Right ventricle myocardium inferior (tissue), 1 donor: ENCODE measurements at regions of chr12 and their contacts with region 1.

Region 1: DNA sequence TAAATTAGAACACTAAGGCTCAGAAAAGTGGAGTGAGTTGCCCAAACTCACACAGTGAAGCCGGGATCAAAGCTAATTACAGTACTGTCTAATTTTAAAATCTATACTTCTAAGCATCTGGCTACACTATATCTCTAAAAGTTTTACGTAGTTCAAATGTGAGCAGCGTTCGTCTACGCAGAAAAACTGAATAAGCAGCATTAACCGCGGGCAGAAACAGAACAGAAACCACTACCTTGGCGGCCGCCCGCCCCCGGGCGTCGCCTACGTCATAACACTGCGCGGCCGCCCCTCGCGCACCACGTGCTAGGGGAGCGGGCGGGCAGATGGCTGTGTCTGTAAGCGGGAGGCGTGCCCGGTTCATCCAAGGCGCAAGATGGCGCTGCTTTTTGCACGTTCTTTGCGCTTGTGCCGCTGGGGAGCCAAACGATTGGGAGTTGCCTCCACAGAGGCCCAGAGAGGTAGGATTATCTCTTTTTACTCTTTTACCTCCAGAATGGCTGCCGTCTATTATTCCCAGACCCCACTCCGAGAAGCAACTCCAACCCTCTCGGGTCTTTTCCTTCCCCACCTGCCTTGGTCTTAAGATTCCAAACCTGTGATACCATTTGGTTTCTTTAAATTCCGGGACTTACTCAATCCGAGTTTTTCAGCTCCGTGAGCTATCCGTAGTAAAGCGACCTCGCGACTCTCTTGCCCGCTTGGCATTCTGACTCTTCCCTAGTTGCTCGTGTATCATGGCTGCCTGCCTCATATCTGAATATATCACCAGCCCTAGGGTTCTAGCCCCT is at the start of gene SPRYD4:
- DNase-seq: peak; percentile 98
- ATAC-seq: peak; percentile 97
- total RNA-seq, gene SPRYD4: 3.1 TPM

Region 2: DNA sequence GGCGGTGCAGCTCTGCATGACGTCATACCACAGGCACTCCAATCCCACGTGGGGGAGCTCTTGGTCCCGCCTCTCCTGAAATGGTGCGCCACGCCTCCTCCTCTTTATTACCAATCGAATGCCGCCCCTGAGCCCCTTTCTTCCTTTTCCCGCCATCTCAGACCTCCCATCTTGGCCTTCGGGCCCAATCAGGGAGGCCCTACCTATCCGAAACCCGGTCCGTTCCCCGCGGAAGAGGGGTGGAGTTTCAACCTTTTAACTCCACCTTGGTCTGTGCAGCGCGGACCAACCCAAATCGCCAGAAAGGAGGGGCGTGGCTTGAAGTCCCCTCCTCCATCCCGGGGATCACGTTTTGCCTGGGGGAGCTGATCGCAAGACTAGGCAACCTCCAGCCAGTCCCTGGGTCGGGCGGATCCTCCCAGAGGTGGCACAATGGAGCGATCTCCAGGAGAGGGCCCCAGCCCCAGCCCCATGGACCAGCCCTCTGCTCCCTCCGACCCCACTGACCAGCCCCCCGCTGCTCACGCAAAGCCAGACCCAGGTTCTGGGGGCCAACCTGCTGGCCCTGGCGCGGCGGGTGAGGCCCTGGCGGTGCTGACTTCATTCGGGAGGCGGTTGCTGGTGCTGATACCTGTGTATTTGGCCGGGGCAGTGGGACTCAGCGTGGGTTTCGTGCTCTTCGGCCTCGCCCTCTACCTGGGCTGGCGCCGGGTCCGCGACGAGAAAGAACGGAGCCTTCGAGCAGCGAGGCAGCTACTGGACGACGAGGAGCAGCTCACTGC is 340.3 kb before region 1 on chr12 and contains the start of gene ESYT1:
- intact Hi-C with region 1: loop called (anchors 5 kb)
- DNase-seq: peak; percentile 99
- ATAC-seq: peak; percentile 97
- total RNA-seq, gene ESYT1: 33.6 TPM

Region 3: DNA sequence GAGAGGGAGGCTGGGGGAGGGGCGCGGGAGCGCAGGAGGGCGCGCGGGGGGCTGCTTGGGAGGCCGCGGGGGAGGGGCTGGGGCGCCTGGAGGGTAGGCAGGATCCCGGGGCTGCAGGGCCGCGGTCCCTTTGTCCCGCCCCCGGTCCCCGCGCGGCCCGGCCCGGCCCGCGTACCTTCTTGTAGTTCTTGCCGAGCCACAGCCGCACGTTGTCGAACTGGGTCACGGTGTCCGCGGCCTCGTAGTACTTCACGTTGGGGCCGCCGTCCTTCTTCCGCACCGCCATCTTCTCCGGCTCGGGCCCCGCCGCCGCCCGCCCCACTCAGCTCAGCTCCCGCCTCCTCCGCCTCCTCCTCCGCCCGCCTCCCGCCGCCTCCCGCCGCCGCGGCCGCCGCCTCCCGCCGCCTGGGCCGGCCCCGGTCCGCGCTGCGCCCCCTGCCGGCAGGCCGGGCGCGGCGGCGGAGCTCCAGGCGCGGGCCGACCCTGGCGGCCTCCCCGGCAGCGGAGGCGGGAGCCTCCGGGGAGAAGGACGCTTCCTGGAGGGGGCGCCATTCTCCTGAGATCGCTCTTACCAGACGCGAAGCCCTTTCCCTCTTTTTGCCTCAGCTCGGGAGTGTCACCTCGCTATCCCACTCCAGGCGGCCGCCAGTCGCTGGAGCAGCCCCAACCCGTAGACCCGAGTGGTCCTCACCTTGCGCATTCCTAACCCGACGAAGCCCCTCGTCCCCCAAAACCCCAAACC is 279.1 kb before region 1 on chr12 and contains the start of gene SMARCC2:
- intact Hi-C with region 1: loop called (anchors 1 kb)
- DNase-seq: peak; percentile 90
- ATAC-seq: peak; percentile 89
- total RNA-seq, gene SMARCC2: 68.8 TPM

Region 4: DNA sequence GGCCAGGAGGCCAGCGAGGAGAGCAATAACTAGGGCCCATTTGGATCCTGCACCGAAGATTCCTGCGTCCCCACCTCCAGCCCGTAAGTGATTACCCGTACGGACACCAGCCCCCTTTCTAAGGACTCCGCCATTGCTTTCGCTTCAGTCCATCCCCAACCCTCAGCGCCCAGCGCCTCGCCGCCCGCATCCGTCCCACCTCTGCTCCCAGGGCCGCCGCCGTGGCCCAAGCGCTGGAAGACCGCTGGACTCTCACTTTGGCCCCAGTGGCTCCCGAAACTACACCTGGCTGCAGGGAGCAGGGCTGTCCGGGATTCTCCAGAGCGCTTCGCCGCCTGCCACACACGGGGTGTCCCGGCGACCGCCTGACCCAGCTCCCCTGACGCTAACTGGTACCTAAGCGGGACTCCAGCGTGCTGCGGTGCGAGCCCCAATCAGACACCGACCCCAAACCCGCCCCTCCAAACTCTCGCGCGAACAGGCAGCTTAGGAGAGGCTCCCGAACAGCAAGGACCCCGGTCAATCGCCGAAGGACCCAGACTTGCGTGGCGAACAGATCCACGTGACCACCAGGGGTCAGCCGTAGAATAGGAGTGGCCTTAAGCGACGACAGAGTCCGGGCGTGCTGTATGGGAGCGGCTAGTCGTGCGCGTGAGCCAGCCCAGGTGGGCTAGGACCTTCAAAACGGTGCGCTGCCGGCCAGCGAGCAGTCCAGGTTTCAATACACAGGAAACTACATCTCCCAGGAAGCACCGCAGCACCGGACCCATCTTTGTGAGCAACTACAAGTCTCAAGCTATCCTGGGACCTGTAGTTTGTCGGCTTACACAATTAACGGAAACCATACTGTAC is 152.6 kb before region 1 on chr12 and contains the start of gene CNPY2:
- intact Hi-C with region 1: loop called (anchors 1 kb)
- DNase-seq: peak; percentile 97
- ATAC-seq: peak; percentile 97
- total RNA-seq, gene CNPY2: 36.5 TPM

Region 5: DNA sequence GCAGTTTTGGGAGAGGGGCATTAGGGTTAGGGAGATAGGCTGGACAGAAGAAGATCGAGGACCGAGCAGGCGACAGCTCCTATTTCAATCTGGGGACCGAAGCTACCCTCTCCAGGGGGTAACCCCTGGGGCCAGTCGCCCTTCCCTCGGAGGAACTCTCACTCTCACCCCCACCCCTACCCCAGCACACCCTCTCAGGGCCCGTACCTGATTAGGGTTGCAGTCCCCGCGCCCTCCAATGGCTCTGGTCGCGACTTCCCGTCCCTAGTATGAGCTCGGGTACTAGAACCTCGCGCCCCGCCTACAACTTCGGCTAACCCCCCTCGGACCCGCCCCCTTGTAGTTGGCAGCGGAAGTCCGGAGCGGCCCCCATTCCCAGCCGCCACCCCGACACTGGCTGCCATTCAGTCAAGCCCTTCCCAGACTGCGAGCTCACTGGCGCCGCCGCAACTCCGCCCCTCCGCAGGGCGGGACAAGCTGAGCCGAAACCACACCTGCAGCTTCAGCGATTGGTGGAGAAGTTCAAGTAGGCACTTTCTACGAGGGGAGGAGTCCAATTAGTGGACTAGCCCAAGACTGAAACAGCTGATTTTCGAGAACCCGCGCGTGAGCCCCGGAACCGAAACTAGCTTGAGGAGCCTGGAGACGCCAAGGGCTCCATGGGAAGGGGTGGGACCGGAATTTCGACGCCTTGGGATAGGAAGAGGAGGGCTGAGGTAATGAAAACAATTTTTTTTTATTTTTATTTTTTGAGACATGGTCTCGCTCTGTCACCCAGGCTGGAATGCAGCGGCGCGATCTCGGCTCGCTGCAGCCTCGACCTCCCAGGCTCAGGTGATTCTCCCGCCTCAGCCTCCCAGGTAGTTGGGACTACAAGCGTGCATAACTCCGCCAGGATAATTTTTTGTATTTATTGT is 108.3 kb before region 1 on chr12 and contains the start of gene STAT2:
- intact Hi-C with region 1: loop called (anchors 1 kb)
- DNase-seq: peak; percentile 99
- ATAC-seq: peak; percentile 99
- total RNA-seq, gene STAT2: 31.6 TPM

Region 6: DNA sequence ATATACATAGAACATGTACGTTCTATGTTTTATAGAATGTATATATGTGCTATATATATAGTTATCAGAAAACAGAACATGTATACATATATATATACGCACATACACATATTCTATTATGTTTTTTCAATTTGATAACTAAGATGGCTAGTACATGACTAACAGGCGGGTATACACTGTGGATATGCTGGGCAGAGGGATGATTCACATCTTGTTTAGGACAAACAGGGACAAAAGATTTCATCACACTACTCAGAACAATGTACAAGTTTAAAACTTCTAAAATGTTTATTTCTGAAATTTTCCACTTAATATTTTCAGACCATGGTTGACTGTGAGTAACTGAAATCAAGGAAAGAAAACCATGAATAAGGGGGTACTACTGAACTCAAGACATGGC is 36.6 kb before region 1 on chr12:
- intact Hi-C with region 1: no loop called
- DNase-seq: no peak
- ATAC-seq: no peak